Activated naive CD4-positive, alpha-beta T cell treated with anti-CD3 and anti-CD28 coated beads, Interleukin-2, amount 10 ng/mL, durations not matched to agents 7 days and 5 days (primary cell): ENCODE measurements at regions of chr16 and their contacts with region 1.

Region 1: DNA sequence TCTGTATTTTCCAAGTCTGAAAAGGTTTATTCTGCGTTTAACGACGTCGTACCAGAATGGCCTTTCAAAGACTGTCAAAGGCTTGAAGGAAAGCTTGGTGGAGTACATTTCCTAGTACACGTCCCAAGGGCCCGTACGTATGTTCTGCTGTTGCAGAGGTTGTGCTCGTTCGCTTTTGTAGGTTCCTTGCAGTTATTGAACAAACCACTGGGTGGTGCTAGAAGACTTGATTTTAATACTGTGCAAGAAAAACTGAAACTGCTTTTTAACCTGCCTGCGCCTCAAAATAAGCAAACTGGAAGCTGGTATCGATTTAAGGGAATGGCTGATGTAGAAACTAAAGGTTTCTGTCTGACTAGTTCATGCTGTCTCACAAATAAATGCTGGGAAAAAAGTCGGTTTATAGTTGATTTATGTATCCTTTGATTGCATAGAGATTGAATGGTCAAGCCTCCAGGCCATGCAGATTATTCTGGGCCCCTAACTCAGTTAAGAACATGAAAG is 54.6 kb downstream of the USP10 start:
- DNase-seq: peak; percentile 81
- H3K4me3 Mint-ChIP-seq: peak overlapping the region; percentile 27
- H3K27ac Mint-ChIP-seq: peak overlapping the region; percentile 64
- H3K4me1 Mint-ChIP-seq: peaks cover 80% of the 10 kb centered on the region
- H3K27me3 Mint-ChIP-seq: no peaks in the 10 kb centered on the region

Region 2: GRCh38 chr16:84332975-84333684 is 421.3 kb before region 1 on chr16:
- CTCF ChIA-PET with region 1: no interaction called
- DNase-seq: no peak
- H3K4me3 Mint-ChIP-seq: no peak overlapping the region
- H3K27ac Mint-ChIP-seq: no peak overlapping the region
- H3K4me1 Mint-ChIP-seq: no peaks in the 10 kb centered on the region
- H3K27me3 Mint-ChIP-seq: peaks cover 15% of the 10 kb centered on the region

Region 3: GRCh38 chr16:84617791-84618580 is 136.4 kb before region 1 on chr16 and contains the start of gene COTL1:
- CTCF ChIA-PET with region 1: interaction called, 28 read pairs
- DNase-seq: peak; percentile 96
- H3K4me3 Mint-ChIP-seq: peak within 1 kb of the TSS; percentile 96
- H3K27ac Mint-ChIP-seq: peak within 1 kb of the TSS; percentile 88
- H3K4me1 Mint-ChIP-seq: peaks cover 63% of the 10 kb centered on the region
- H3K27me3 Mint-ChIP-seq: peaks cover 31% of the 10 kb centered on the region

Region 4: DNA sequence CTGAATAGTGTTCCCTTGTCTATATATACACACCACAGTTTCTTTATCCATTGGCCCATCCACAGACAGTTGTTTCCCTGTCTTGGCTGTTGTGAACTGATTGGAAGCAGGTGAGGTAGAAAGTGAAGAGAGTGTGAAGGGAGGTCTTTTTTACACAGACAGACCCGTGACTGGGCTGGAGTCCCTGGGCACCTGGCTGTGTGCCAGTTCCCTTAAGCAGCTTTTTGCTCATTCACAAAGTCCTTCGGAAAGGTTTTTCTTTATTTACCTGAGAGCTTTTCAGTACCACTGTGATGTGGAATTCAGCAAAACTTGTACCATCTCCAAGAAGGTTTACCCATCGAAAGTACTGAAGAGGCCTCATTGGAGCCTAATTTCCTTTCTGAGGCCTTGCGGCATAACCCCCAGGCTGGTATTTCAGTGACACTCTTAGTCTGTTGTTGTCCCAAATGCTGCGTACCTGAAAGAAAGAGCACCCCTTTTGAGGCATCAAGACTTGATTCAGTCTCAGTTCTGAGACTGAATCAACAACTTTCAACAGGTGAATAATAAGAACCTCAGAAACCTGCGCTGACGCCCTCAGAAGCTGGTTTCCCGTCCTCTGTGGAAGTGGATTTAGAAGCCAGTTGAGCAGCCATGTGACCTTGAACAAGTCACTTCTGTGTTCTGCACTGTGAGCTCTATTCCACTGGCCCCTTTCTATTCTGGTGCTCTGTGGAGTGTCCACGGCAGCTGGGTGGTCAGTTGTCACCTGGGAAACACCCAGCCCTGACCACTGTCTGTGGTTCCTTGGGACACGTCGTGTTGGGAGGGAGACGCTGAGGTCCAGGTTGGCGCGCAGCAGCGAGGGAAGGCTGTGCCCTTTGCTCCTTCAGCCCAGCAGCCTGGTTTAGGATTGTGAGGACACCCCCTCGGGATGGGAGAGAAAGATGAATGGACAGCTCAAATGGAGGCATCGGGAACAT is 11.5 kb after region 1 on chr16:
- CTCF ChIA-PET with region 1: interaction called, 32 read pairs
- DNase-seq: peak; percentile 48
- H3K4me3 Mint-ChIP-seq: peak overlapping the region; percentile 15
- H3K27ac Mint-ChIP-seq: peak overlapping the region; percentile 93
- H3K4me1 Mint-ChIP-seq: peaks cover 63% of the 10 kb centered on the region
- H3K27me3 Mint-ChIP-seq: no peaks in the 10 kb centered on the region

Region 5: DNA sequence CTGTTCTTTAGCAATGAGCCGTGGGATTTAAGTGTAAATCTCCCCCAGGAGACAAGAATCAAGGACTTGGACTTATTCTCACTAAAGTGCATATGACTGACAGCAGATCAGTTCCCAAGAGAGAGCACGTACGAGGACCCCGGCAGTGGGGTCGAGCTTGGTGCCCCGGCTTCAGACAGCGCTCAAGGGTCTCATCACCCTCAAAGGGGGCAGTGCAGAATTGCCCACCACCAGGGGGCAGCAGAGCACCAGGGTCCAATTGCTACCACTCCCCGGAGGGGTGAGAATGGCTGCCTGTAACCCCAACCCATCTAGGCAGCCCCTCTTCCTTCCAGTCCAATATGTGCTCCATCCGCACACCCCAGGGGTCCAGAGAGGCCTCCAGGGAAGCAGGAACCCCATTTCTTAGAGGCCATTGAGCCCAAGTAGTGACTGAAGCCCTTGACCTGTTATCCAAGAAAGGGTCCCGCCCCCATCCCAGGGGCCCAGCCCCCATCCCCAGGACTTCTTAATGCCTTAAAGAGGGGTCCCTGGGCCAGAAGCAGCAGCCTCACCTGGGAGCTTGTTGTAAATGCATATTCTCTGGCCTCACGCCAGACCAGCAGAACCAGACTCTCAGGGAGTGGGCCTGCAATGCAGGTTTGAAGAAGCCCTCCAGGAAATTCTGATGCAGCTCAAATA is 170.8 kb after region 1 on chr16:
- CTCF ChIA-PET with region 1: interaction called, 20 read pairs
- DNase-seq: peak; percentile 81
- H3K4me3 Mint-ChIP-seq: no peak overlapping the region
- H3K27ac Mint-ChIP-seq: no peak overlapping the region
- H3K4me1 Mint-ChIP-seq: no peaks in the 10 kb centered on the region
- H3K27me3 Mint-ChIP-seq: peaks cover 12% of the 10 kb centered on the region

Region 6: GRCh38 chr16:84952335-84953189 is 198.2 kb after region 1 on chr16:
- CTCF ChIA-PET with region 1: interaction called, 173 read pairs
- DNase-seq: peak; percentile 79
- H3K4me3 Mint-ChIP-seq: no peak overlapping the region
- H3K27ac Mint-ChIP-seq: no peak overlapping the region
- H3K4me1 Mint-ChIP-seq: no peaks in the 10 kb centered on the region
- H3K27me3 Mint-ChIP-seq: peaks cover 36% of the 10 kb centered on the region

Region 7: GRCh38 chr16:84970447-84971127 is 216.2 kb after region 1 on chr16:
- CTCF ChIA-PET with region 1: interaction called, 60 read pairs
- DNase-seq: peak; percentile 84
- H3K4me3 Mint-ChIP-seq: no peak overlapping the region
- H3K27ac Mint-ChIP-seq: no peak overlapping the region
- H3K4me1 Mint-ChIP-seq: peaks cover 4% of the 10 kb centered on the region
- H3K27me3 Mint-ChIP-seq: peaks cover 24% of the 10 kb centered on the region